Caco-2 (cell line): ENCODE measurements at regions of chr3 and their contacts with region 1.

Region 1: GRCh38 chr3:184679056-184679816 is 32.6 kb downstream of the MAGEF1 start:
- DNase-seq: no peak
- H3K4me3 ChIP-seq: no peak overlapping the region
- H3K4me3 Mint-ChIP-seq: no peak overlapping the region
- H3K27ac Mint-ChIP-seq: no peak overlapping the region
- H3K4me1 ChIP-seq: no peaks in the 10 kb centered on the region
- H3K4me1 Mint-ChIP-seq: peaks cover 4% of the 10 kb centered on the region
- H3K27me3 ChIP-seq: no peaks in the 10 kb centered on the region
- H3K27me3 Mint-ChIP-seq: no peaks in the 10 kb centered on the region
- CTCF ChIP-seq: no peak

Region 2: DNA sequence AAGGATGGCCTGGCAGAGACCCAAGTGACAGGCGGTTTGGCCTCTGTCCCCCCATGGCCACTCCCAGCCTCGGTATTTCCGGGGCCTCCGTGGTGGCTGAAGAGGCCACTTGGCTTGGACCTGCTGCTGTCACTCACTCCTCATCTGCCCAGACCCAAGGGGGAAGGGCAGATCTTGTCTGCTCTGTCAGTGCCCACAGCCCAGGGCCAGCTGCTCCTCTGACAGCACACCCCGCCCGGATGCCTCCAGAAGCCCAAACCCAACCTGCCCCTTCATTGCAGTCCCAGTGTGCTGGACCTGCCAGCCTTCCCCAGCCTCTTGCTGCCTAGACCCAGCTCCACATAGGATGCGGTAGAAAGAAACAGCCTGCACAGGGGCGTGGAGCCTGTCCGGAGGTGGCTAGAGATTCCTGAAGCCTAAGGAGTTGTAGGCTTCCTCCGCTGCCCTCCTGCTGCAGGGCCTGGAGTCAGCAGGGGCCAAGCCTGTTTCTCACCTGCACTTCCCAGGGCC is 19.4 kb before region 1 on chr3:
- CTCF ChIA-PET with region 1: no interaction called
- POLR2A ChIA-PET with region 1: interaction called, 11 read pairs
- intact Hi-C with region 1: no loop called
- DNase-seq: peak; percentile 18 to 44
- H3K4me3 ChIP-seq: no peak overlapping the region
- H3K4me3 Mint-ChIP-seq: no peak overlapping the region
- H3K27ac Mint-ChIP-seq: no peak overlapping the region
- H3K4me1 ChIP-seq: peaks cover 7% of the 10 kb centered on the region
- H3K4me1 Mint-ChIP-seq: peaks cover 7% of the 10 kb centered on the region
- H3K27me3 ChIP-seq: no peaks in the 10 kb centered on the region
- H3K27me3 Mint-ChIP-seq: no peaks in the 10 kb centered on the region
- CTCF ChIP-seq: no peak